Psoas muscle (tissue), 8 donors: ENCODE measurements at regions of chr12 and their contacts with region 1.

Region 1: GRCh38 chr12:98593351-98594049 is at the start of gene SLC25A3:
- DNase-seq: peak; percentile 95 to 99
- ATAC-seq: peak; percentile 97 to 99 (median 99)
- H3K4me3 ChIP-seq: peak within 1 kb of the TSS; percentile 98
- H3K27ac ChIP-seq: peak within 1 kb of the TSS; percentile 98
- H3K4me1 ChIP-seq: peaks cover 22% of the 10 kb centered on the region
- H3K27me3 ChIP-seq: no peaks in the 10 kb centered on the region
- CTCF ChIP-seq: no peak
- total RNA-seq, gene SLC25A3: 665 to 1,243 (median 857) TPM

Region 2: DNA sequence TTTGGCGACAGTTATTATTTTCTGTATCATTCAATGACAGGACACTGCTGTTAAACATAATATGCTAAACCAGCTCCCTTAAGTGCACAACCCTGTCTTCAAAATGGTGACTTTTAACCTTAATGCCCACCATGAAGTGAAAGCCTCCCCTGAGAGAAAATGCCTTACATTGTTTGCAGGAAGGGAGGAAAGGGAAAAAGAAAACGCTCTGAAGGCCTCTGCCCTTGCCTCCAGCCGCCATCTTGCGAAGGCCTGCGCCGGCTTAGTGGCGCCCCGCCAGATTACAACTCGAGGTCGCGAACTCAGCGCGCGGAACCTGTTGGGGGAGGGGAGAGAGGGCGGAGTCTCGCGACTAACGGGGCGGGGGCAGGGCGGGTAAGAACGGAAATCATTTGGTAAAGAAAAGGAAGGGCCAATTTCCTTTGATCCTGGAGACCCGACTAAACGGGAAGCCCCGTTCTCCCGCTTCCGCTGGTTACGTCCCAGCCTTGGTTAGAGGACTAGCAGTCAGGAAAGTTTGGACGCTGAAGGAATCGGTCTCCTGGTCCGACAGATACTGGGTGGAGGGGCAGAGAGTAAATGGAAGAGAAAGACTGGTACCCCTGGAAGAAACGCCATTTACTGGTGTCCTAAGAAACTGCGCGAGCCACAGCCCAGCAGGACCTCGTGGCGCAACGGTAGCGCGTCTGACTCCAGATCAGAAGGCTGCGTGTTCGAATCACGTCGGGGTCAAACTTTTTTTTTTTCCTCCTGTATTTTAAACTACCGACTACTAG is 89.7 kb before region 1 on chr12:
- intact Hi-C with region 1: loop called in 1 of 2 experiments (anchors 5 kb)
- DNase-seq: peak; percentile 95 to 98
- ATAC-seq: peak; percentile 95 to 96 (median 96)
- H3K4me3 ChIP-seq: peak overlapping the region; percentile 81
- H3K27ac ChIP-seq: peak overlapping the region; percentile 96
- H3K4me1 ChIP-seq: no peaks in the 10 kb centered on the region
- H3K27me3 ChIP-seq: no peaks in the 10 kb centered on the region
- CTCF ChIP-seq: no peak

Region 3: DNA sequence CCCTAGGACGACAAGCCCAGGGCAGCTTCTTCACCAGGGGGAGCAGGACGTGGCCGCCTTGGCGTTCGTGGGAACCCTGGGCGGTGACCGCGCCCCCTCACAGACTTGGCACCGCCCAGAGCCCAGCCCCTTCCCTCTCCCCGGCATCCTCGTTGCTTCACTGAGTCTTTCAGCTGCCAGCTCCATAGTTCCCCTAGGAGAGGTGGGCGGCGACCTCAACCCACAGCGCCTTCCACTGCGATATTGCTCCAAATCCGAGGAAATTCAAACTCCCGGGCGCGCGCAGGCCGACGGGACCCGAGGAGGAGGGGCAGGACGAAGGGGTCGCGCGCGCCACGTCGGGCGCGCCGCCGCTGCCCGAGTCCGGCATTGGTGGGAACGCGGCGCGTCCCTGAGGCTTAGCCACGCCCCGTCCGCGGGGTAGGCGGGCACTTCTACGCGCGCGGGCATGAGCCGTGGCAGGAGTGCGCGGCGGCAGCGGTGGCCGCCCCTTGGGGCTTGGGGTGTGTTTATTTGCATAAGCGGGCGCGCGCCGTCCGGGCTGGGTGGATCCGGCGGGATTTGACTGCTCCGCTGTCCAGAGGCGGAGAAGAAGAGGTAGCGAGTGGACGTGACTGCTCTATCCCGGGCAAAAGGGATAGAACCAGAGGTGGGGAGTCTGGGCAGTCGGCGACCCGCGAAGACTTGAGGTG is 51.4 kb after region 1 on chr12 and contains the starts of genes APAF1 and IKBIP:
- intact Hi-C with region 1: loop called (anchors 2 to 5 kb)
- DNase-seq: peak; percentile 98
- ATAC-seq: peak; percentile 97 to 99 (median 98)
- H3K4me3 ChIP-seq: peak within 1 kb of the TSS; percentile 74
- H3K27ac ChIP-seq: peak within 1 kb of the TSS; percentile 74
- H3K4me1 ChIP-seq: peaks cover 17% of the 10 kb centered on the region
- H3K27me3 ChIP-seq: no peaks in the 10 kb centered on the region
- CTCF ChIP-seq: no peak
- total RNA-seq, gene APAF1: 4.3 to 6.8 (median 5.3) TPM
- total RNA-seq, gene IKBIP: 2.1 to 6.0 (median 3.4) TPM